Activated B cell treated with CpG ODN at 0.5 μM for 24 hours (primary cell): ENCODE measurements at regions of chr6 and their contacts with region 1.

Region 1: DNA sequence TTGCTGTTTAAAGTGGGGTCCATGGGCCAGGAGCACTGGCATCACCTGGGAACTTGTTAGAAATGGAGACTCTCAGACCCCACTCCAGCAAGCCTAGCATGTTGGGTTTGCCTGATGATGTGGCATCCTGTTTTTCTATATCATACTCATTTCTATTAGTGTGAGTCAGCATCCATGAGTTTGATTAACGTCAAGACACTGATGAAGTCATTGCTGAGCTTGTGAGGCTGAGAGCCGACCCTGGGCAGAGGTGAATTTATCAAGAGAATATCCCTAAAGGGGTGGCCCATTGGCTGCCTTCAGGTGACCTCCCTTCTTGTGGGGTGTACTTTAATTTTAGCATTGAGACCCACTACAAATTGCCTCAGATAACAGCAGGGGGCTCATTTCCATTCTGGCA is 43.4 kb upstream of the RNF144B start:
- DNase-seq: no peak
- ATAC-seq: peak; percentile 54
- H3K4me3 Mint-ChIP-seq: no peak overlapping the region
- H3K27ac Mint-ChIP-seq: peak overlapping the region; percentile 50
- H3K4me1 Mint-ChIP-seq: peaks cover 17% of the 10 kb centered on the region
- H3K27me3 Mint-ChIP-seq: no peaks in the 10 kb centered on the region
- CTCF ChIP-seq: no peak

Region 2: DNA sequence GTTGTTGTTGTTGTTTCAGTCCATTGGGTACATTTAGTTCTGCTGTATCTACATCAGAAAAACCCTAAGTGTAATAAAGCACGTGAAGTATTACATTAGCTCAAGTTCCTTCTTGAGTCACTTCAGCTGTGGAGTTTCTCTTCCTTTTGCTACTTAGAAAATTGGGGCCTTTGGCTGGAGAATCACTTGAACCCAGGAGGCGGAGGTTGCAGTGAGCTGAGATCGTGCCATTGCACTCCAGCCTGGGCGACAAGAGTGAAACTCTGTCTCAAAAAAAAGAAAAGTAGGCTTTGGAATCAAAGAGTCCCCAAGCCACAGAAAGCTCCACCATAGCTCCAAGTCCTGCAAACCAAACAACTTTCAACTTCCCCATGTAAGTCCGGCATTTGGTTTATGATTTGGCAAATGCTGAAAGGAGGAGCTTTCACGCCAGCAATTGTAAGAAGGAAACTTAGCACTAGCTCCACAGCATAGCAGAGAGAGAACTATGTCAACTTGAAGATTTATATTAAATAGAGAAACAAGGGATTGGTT is 13.1 kb before region 1 on chr6:
- CTCF ChIA-PET with region 1: no interaction called
- POLR2A ChIA-PET with region 1: interaction called, 13 read pairs
- intact Hi-C with region 1: no loop called
- DNase-seq: peak; percentile 24
- ATAC-seq: peak; percentile 62
- H3K4me3 Mint-ChIP-seq: peak overlapping the region; percentile 29
- H3K27ac Mint-ChIP-seq: peak overlapping the region; percentile 84
- H3K4me1 Mint-ChIP-seq: peaks cover 53% of the 10 kb centered on the region
- H3K27me3 Mint-ChIP-seq: no peaks in the 10 kb centered on the region
- CTCF ChIP-seq: no peak

Region 3: DNA sequence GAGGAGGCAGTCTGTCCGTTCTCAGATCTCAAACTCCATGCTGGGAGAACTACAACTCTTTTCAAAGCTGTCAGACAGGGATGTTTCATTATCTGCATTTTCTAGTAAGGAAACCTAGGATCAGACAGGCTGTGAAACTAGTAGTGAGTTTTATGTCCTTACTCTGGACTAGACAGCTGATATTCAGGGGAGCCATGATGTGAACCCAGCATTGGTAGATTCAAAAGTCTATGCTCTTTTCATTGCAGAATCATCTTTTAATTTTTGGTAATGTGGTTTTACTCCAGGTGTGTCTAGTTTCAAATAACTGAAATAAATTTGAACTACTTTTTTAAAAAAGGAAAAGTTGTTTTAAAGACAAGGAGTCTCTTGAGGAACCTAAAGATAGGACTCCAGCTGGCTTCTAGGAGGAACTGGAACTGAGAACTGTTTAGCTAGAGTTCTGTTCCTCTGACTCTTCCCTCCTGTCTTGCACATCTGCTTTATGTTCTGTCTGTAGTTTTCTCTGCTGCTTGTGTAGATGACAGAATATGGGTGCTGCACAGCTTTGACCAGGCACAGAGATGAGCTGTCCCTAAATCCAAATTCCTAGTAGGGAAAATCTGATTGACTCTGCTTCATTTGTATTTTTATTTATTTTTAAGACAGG is 15.6 kb after region 1 on chr6:
- CTCF ChIA-PET with region 1: no interaction called
- POLR2A ChIA-PET with region 1: interaction called, 12 read pairs
- intact Hi-C with region 1: no loop called
- DNase-seq: no peak
- ATAC-seq: peak; percentile 75
- H3K4me3 Mint-ChIP-seq: peak overlapping the region; percentile 20
- H3K27ac Mint-ChIP-seq: peak overlapping the region; percentile 65
- H3K4me1 Mint-ChIP-seq: peaks cover 40% of the 10 kb centered on the region
- H3K27me3 Mint-ChIP-seq: no peaks in the 10 kb centered on the region
- CTCF ChIP-seq: no peak